Sigmoid colon (tissue), 7 donors: ENCODE measurements at regions of chr3 and their contacts with region 1.

Region 1: GRCh38 chr3:194404365-194405140 is 5.5 kb upstream of the GP5 start:
- DNase-seq: no peak
- H3K4me3 ChIP-seq: no peak overlapping the region
- H3K27ac ChIP-seq: no peak overlapping the region
- H3K4me1 ChIP-seq: no peaks in the 10 kb centered on the region
- H3K27me3 ChIP-seq: peaks cover 0 to 7% (median 5%) of the 10 kb centered on the region in 3 donors
- CTCF ChIP-seq: peak; percentile 19 to 71 (median 59)
- EP300 ChIP-seq: no peak
- POLR2A ChIP-seq: no peak

Region 2: GRCh38 chr3:193418576-193419373 is 985.8 kb before region 1 on chr3:
- intact Hi-C with region 1: no loop called
- DNase-seq: no peak
- H3K4me3 ChIP-seq: no peak overlapping the region
- H3K27ac ChIP-seq: no peak overlapping the region
- H3K4me1 ChIP-seq: no peaks in the 10 kb centered on the region
- H3K27me3 ChIP-seq: no peaks in the 10 kb centered on the region
- CTCF ChIP-seq: no peak
- EP300 ChIP-seq: no peak
- POLR2A ChIP-seq: no peak

Region 3: GRCh38 chr3:193780810-193781472 is 623.6 kb before region 1 on chr3:
- intact Hi-C with region 1: loop called (anchors 2 kb)
- DNase-seq: peak; percentile 88
- H3K4me3 ChIP-seq: no peak overlapping the region
- H3K27ac ChIP-seq: peak overlapping the region; percentile 30 to 68 (median 53)
- H3K4me1 ChIP-seq: peaks cover 0 to 16% (median 12%) of the 10 kb centered on the region in 4 donors
- H3K27me3 ChIP-seq: no peaks in the 10 kb centered on the region
- CTCF ChIP-seq: peak; percentile 70 to 89 (median 80)
- EP300 ChIP-seq: no peak
- POLR2A ChIP-seq: no peak

Region 4: GRCh38 chr3:194103983-194104751 is 300.4 kb before region 1 on chr3:
- intact Hi-C with region 1: no loop called
- DNase-seq: no peak
- H3K4me3 ChIP-seq: no peak overlapping the region
- H3K27ac ChIP-seq: no peak overlapping the region
- H3K4me1 ChIP-seq: no peaks in the 10 kb centered on the region
- H3K27me3 ChIP-seq: no peaks in the 10 kb centered on the region
- CTCF ChIP-seq: no peak
- EP300 ChIP-seq: no peak
- POLR2A ChIP-seq: no peak

Region 5: GRCh38 chr3:194333212-194333980 is 71.2 kb before region 1 on chr3:
- intact Hi-C with region 1: loop called (anchors 1 kb)
- DNase-seq: peak; percentile 90
- H3K4me3 ChIP-seq: peak overlapping the region; percentile 11 to 48 (median 39)
- H3K27ac ChIP-seq: no peak overlapping the region
- H3K4me1 ChIP-seq: peaks cover 0 to 21% (median 11%) of the 10 kb centered on the region in 4 donors
- H3K27me3 ChIP-seq: peaks cover 0 to 14% (median 0%) of the 10 kb centered on the region in 3 donors
- CTCF ChIP-seq: peak; percentile 96 to 99 (median 98)
- EP300 ChIP-seq: no peak
- POLR2A ChIP-seq: no peak

Region 6: GRCh38 chr3:194365978-194366490 is 38.5 kb before region 1 on chr3:
- intact Hi-C with region 1: loop called (anchors 1 kb)
- DNase-seq: no peak
- H3K4me3 ChIP-seq: no peak overlapping the region
- H3K27ac ChIP-seq: no peak overlapping the region
- H3K4me1 ChIP-seq: peaks cover 0 to 18% (median 6%) of the 10 kb centered on the region in 4 donors
- H3K27me3 ChIP-seq: peaks cover 0 to 21% (median 0%) of the 10 kb centered on the region in 3 donors
- CTCF ChIP-seq: no peak
- EP300 ChIP-seq: no peak
- POLR2A ChIP-seq: no peak

Region 7: GRCh38 chr3:194512895-194513601 is 108.5 kb after region 1 on chr3:
- intact Hi-C with region 1: no loop called
- DNase-seq: no peak
- H3K4me3 ChIP-seq: no peak overlapping the region
- H3K27ac ChIP-seq: no peak overlapping the region
- H3K4me1 ChIP-seq: no peaks in the 10 kb centered on the region
- H3K27me3 ChIP-seq: no peaks in the 10 kb centered on the region
- CTCF ChIP-seq: no peak
- EP300 ChIP-seq: no peak
- POLR2A ChIP-seq: no peak